WTC11 (cell line): ENCODE measurements at regions of chr17 and their contacts with region 1.

Region 1: GRCh38 chr17:50177983-50178834 is 12.4 kb downstream of the SGCA start:
- DNase-seq: peak; percentile 68
- ATAC-seq: peak; percentile 76
- H3K4me3 Mint-ChIP-seq: peak overlapping the region; percentile 56
- H3K27ac Mint-ChIP-seq: peak overlapping the region; percentile 37; the same call in 1 of the 2 replicates
- H3K4me1 Mint-ChIP-seq: peaks cover 31% of the 10 kb centered on the region
- H3K27me3 Mint-ChIP-seq: peaks cover 6% of the 10 kb centered on the region; the same call in 1 of the 2 replicates
- CTCF ChIP-seq: no peak

Region 2: DNA sequence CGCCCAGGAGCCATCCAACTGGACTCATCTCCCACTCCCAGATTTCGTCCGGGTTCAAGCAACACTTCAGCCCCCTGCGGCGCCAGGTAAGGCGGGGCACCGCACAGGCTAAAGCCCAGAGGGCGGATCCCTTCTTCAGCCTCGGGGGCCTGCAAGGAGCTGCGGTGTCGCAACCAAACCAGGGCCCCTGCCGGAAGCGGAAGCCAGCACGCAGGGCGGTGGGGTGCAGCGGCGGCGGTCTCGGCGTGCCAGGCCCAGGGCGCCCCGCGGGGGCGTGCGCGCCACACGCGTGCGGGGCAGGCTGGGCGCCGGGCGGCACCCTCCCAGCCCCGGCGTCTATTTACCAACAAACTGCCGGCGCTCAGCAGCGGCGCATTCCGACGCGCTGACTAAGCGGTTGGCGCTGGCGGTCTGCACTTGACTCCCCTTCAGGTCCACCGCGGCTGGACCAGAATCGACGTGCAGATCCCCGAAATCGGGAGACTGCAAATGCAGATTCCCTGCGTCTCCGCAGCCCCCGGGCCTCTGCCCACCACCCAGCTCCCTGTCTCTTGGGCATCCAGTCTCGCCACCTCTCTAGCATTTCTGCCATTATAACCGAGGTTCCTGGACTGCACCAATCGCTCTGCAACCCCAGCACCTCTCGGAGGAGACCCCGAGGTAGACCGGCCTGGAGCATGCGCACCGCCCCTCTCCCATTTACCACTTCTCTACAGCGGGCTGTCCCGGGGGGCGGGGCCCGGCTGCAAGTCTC is 209.7 kb before region 1 on chr17:
- CTCF ChIA-PET with region 1: no interaction called
- POLR2A ChIA-PET with region 1: no interaction called
- DNase-seq: peak; percentile 95
- ATAC-seq: peak; percentile 72
- H3K4me3 Mint-ChIP-seq: peak overlapping the region; percentile 93
- H3K27ac Mint-ChIP-seq: peak overlapping the region; percentile 95
- H3K4me1 Mint-ChIP-seq: peaks cover 51% of the 10 kb centered on the region
- H3K27me3 Mint-ChIP-seq: peaks cover 99% of the 10 kb centered on the region
- CTCF ChIP-seq: no peak

Region 3: DNA sequence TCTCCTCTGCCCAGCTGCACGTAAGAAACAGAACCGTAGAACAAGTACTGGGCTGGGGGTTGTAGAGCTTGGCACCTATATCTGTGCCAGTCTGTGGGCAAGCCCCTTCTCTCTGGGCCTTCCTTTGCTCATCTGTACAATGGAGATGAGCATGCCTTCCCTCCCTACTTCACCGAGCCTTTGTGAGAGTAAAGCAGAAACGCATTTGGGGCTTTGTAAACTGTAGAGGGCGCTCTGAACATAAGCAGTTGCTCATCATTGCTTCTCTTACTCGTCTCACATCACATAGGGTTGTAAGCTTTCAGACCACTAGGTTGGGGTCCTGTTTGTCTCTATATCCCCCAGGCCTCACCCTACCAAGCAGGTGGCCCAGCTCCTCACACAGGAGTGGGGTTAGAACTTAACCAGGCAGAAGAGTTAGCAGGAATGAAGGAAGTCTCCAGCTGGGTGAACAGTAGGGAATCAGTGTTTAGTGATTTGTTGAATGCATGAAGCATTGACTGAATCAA is 63.3 kb before region 1 on chr17:
- CTCF ChIA-PET with region 1: interaction called, 14 read pairs
- POLR2A ChIA-PET with region 1: no interaction called
- DNase-seq: peak; percentile 55
- ATAC-seq: peak; percentile 55
- H3K4me3 Mint-ChIP-seq: peak overlapping the region; percentile 1; the same call in 1 of the 2 replicates
- H3K27ac Mint-ChIP-seq: no peak overlapping the region
- H3K4me1 Mint-ChIP-seq: peaks cover 21% of the 10 kb centered on the region
- H3K27me3 Mint-ChIP-seq: peaks cover 44% of the 10 kb centered on the region
- CTCF ChIP-seq: peak; percentile 40; the same call in 1 of the 2 replicates

Region 4: DNA sequence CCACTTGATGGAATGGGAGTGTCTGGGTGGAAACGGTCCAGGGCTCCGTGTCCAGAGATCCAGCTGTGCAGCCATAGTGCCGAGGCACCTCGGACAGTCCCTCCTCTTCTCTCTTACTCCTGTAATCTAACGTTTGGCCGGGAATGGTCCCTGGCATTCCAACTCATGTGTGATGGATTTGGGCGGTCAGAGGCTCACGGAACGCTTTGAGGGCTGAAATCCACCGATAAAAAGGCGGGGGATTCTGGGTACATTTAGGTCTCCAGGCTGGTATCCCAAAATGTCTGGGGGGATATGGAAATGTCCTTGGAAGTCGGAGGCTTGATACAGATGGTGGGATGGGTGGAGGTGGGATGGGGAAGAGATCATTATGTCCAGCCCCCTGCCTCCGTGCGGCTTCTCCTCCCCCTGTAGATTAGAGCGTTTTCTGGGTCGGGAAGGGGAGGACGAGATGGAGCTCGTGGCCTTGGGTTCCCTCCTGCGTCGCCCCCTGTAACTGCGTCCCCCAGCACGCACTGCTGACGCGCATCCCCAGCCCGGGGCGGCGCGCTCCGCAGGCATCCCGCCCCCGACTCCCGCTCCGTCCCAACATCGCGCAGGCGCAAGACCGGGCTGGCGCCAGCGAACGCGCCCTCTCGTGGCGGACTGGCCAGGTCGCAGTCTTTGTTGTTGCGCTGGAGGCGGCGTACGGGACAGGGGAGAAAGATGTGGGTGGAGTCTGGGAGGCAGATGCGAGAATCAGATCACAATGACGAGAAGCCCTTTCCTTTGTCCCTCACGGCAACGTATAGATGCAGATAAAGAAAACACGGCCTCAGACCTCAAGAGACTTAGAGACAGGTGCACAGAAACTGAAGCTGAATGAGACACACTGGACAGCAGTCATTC is 16.9 kb before region 1 on chr17:
- CTCF ChIA-PET with region 1: interaction called, 18 read pairs
- POLR2A ChIA-PET with region 1: interaction called, 6 read pairs
- DNase-seq: peak; percentile 96
- ATAC-seq: peak; percentile 92
- H3K4me3 Mint-ChIP-seq: peak overlapping the region; percentile 79
- H3K27ac Mint-ChIP-seq: peak overlapping the region; percentile 51
- H3K4me1 Mint-ChIP-seq: peaks cover 10% of the 10 kb centered on the region
- H3K27me3 Mint-ChIP-seq: peaks cover 33% of the 10 kb centered on the region
- CTCF ChIP-seq: peak; percentile 64

Region 5: GRCh38 chr17:50213026-50214022 is 35.1 kb after region 1 on chr17:
- CTCF ChIA-PET with region 1: interaction called, 13 read pairs
- POLR2A ChIA-PET with region 1: no interaction called
- DNase-seq: peak; percentile 56
- ATAC-seq: peak; percentile 71
- H3K4me3 Mint-ChIP-seq: no peak overlapping the region
- H3K27ac Mint-ChIP-seq: no peak overlapping the region
- H3K4me1 Mint-ChIP-seq: peaks cover 48% of the 10 kb centered on the region
- H3K27me3 Mint-ChIP-seq: peaks cover 10% of the 10 kb centered on the region
- CTCF ChIP-seq: no peak

Region 6: GRCh38 chr17:50258647-50259476 is 80.7 kb after region 1 on chr17:
- CTCF ChIA-PET with region 1: no interaction called
- POLR2A ChIA-PET with region 1: no interaction called
- DNase-seq: no peak
- ATAC-seq: no peak
- H3K4me3 Mint-ChIP-seq: no peak overlapping the region
- H3K27ac Mint-ChIP-seq: no peak overlapping the region
- H3K4me1 Mint-ChIP-seq: peaks cover 9% of the 10 kb centered on the region
- H3K27me3 Mint-ChIP-seq: no peaks in the 10 kb centered on the region; the same call in none of the 2 replicates
- CTCF ChIP-seq: no peak

Region 7: GRCh38 chr17:50297407-50297865 is 119.2 kb after region 1 on chr17:
- CTCF ChIA-PET with region 1: interaction called, 16 read pairs
- POLR2A ChIA-PET with region 1: no interaction called
- DNase-seq: peak; percentile 91
- ATAC-seq: peak; percentile 94
- H3K4me3 Mint-ChIP-seq: no peak overlapping the region
- H3K27ac Mint-ChIP-seq: no peak overlapping the region
- H3K4me1 Mint-ChIP-seq: peaks cover 11% of the 10 kb centered on the region
- H3K27me3 Mint-ChIP-seq: peaks cover 7% of the 10 kb centered on the region
- CTCF ChIP-seq: peak; percentile 92